Heart left ventricle (tissue), 16 donors: ENCODE measurements at regions of chr15 and their contacts with region 1.

Region 1: GRCh38 chr15:45795440-45796069 is 160.7 kb downstream of the SQOR start:
- DNase-seq: peak in 2 of 5 donors; percentile 12 to 20
- ATAC-seq: peak in 3 of 4 donors; percentile 59 to 71 (median 68)
- H3K4me3 ChIP-seq: no peak overlapping the region
- H3K27ac ChIP-seq: no peak overlapping the region
- H3K4me1 ChIP-seq: no peaks in the 10 kb centered on the region
- H3K27me3 ChIP-seq: peaks cover 0 to 8% (median 0%) of the 10 kb centered on the region in 9 donors
- CTCF ChIP-seq: peak; percentile 41 to 76 (median 64)
- POLR2A ChIP-seq: no peak

Region 2: GRCh38 chr15:45993508-45993907 is 198.0 kb after region 1 on chr15:
- intact Hi-C with region 1: loop called in 1 of 10 experiments (anchors 5 kb)
- DNase-seq: no peak
- ATAC-seq: peak; percentile 28 to 85 (median 51)
- H3K4me3 ChIP-seq: no peak overlapping the region
- H3K27ac ChIP-seq: no peak overlapping the region
- H3K4me1 ChIP-seq: peaks cover 0 to 14% (median 0%) of the 10 kb centered on the region in 12 donors
- H3K27me3 ChIP-seq: no peaks in the 10 kb centered on the region
- CTCF ChIP-seq: no peak
- POLR2A ChIP-seq: no peak

Region 3: GRCh38 chr15:46080016-46080415 is 284.5 kb after region 1 on chr15:
- intact Hi-C with region 1: loop called in 4 of 10 experiments (anchors 5 to 10 kb)
- DNase-seq: peak in 1 of 5 donors; percentile 62
- ATAC-seq: peak in 1 of 4 donors; percentile 44
- H3K4me3 ChIP-seq: no peak overlapping the region
- H3K27ac ChIP-seq: peak overlapping the region in 1 of 12 donors; percentile 16
- H3K4me1 ChIP-seq: peaks cover 0 to 13% (median 2%) of the 10 kb centered on the region in 12 donors
- H3K27me3 ChIP-seq: no peaks in the 10 kb centered on the region
- CTCF ChIP-seq: no peak
- POLR2A ChIP-seq: no peak

Region 4: DNA sequence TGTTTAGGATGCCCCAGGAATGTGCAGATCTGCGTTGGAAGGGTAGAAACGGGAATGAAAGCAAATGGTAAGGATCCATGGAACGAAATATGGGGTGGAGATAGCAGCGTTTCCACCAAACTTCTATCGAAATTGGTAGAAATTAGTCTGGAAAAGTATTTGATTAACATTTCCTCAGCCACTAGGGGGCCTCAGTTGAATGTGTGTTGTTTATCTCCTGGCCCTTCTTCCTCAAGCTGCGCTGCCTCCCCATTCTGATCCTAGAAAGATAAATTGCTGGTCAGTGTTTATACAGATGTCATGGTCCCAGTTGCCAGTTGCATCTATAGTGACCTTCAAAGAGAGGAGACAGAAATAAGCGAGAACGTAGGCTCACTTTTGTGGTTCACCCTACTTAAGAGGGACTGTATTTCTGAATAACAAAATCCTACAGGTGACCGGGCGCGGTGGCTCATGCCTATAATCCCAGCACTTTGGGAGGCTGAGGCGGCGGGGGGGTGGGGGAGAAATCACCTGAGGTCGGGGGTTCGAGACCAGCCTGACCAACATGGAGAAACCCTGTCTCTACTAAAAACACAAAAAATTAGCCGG is 296.4 kb after region 1 on chr15:
- intact Hi-C with region 1: loop called in 4 of 10 experiments (anchors 10 kb)
- DNase-seq: peak in 1 of 5 donors; percentile 10
- ATAC-seq: no peak
- H3K4me3 ChIP-seq: no peak overlapping the region
- H3K27ac ChIP-seq: no peak overlapping the region
- H3K4me1 ChIP-seq: peaks cover 0 to 24% (median 2%) of the 10 kb centered on the region in 12 donors
- H3K27me3 ChIP-seq: no peaks in the 10 kb centered on the region
- CTCF ChIP-seq: peak; percentile 26 to 57 (median 39)
- POLR2A ChIP-seq: no peak

Region 5: DNA sequence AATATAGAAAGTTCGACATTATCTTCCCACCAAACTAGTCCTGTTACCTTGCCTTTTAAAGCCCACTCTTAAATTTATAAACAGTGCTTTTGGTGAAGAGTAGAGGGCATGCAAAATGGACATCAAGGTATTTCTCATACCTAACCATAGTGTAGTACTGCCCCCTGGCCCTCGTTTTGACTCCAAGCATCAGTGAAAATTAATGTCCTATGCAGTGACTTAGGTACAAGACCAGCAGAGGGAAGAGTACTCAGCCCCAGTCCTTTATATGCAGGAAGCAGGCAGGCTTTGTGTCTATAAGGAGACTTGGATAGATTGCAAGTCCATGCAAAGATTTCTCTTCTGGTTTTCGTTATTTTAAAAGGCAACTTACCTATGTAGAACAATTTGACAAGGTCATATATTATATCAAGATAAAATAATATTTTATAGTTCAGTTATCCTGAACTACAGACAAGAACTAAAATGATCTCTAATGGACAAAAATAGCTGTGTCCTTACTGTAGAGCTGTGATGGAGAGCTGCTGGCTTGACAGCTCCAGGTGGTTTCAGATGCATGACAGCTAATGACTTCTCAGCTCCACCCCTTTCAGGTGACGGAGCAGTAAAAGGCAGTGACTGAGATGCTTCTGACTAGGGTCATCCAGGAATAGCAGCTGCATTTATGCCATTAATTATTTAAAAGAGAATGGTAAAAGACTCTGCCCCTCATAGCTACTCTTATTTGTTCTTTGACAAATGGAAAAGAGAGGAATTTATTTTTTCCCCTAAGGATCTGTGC is 485.4 kb after region 1 on chr15:
- intact Hi-C with region 1: loop called in 6 of 10 experiments (anchors 5 to 10 kb)
- DNase-seq: no peak
- ATAC-seq: no peak
- H3K4me3 ChIP-seq: no peak overlapping the region
- H3K27ac ChIP-seq: no peak overlapping the region
- H3K4me1 ChIP-seq: no peaks in the 10 kb centered on the region
- H3K27me3 ChIP-seq: no peaks in the 10 kb centered on the region
- CTCF ChIP-seq: peak in 6 of 12 donors; percentile 12 to 37 (median 26)
- POLR2A ChIP-seq: no peak

Region 6: DNA sequence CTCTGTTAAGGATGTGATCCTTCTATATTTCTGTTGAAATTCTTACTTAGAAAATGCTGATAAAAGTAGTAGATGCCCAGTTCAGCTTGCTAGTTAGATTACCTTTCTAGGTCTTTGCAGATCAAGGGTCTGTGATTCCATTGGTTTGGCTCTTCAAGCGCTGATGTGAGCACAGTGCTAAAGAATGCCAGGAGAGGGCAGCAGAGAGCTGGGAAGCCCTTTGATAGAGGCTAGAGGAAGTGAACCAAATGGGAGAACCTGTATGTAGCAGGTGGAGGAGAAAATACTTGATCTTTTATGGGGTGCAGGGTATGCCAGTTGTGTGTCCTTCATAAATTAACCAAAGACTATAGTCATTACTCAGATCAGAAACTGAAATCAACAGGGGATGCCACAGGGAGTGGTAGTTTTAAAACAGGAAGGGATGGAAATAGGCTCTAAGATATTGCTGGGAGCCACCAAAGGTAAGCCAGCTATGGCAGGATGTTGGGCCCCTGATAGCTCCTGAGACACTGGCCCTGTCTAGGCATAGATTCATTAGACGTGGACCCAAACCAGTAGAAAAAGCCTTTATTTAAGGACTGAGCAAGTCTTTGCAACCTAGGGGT is 516.7 kb after region 1 on chr15:
- intact Hi-C with region 1: loop called in 1 of 10 experiments (anchors 10 kb)
- DNase-seq: peak in 4 of 5 donors; percentile 52 to 67 (median 59)
- ATAC-seq: peak; percentile 47 to 94 (median 85)
- H3K4me3 ChIP-seq: no peak overlapping the region
- H3K27ac ChIP-seq: no peak overlapping the region
- H3K4me1 ChIP-seq: peaks cover 0 to 21% (median 0%) of the 10 kb centered on the region in 12 donors
- H3K27me3 ChIP-seq: no peaks in the 10 kb centered on the region
- CTCF ChIP-seq: peak; percentile 81 to 96 (median 87)
- POLR2A ChIP-seq: no peak